ENCODE measurements at regions of chr1 and their contacts with region 1.

Region 1: GRCh38 chr1:205523891-205524793 is 19.7 kb downstream of the CDK18 start:
- DNase-seq: peak; percentile 85
- ATAC-seq: peak; percentile 62
- H3K4me3 Mint-ChIP-seq: no peak overlapping the region
- H3K27ac Mint-ChIP-seq: no peak overlapping the region
- H3K4me1 Mint-ChIP-seq: no peaks in the 10 kb centered on the region
- H3K27me3 Mint-ChIP-seq: no peaks in the 10 kb centered on the region
- CTCF ChIP-seq: peak; percentile 81

Region 2: DNA sequence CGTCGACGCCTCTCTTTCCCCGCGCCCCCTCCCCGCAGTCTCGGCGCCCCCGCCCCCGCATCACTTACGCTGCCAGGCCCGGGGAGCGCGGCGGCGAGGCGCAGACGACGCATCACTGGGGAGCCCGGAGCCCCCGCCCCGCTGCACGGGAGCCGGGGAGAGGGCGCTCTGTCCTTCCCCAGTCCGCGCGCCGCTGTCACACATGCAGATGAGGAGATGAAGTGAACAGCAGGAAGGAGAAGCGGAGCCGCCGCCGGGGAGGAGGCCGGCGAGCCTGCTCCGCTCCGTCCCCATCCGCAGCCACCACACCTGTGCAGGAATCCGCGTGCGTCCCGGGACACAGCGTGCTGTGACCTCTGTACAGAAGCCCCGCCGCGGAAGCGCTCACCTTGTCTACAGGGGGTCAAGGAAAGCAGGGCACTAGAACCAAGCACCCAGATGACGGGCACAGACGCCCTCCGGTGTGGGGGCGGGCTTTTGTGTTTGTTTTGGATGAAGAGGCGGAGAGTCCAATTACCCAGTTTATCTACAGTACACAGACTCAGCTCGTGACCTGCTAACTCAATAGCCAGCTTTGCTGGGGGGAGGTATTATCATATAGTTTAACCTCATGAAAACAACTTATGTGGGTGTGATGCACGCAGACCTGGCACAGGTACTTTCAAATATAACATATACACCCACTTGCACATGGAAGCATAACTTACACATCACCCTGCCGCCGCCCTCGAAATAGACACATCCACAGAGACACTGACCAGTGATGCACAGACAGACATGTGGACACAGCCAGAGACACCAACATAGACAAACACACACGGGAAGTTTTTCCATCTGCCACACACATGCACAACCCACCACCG is 179.8 kb before region 1 on chr1:
- CTCF ChIA-PET with region 1: interaction called, 12 read pairs
- POLR2A ChIA-PET with region 1: no interaction called
- intact Hi-C with region 1: no loop called
- DNase-seq: peak; percentile 65
- ATAC-seq: peak; percentile 77
- H3K4me3 Mint-ChIP-seq: peak overlapping the region; percentile 35
- H3K27ac Mint-ChIP-seq: no peak overlapping the region
- H3K4me1 Mint-ChIP-seq: peaks cover 11% of the 10 kb centered on the region
- H3K27me3 Mint-ChIP-seq: peaks cover 42% of the 10 kb centered on the region
- CTCF ChIP-seq: no peak

Region 3: GRCh38 chr1:205396967-205397616 is 127.0 kb before region 1 on chr1:
- CTCF ChIA-PET with region 1: interaction called, 72 read pairs
- POLR2A ChIA-PET with region 1: no interaction called
- intact Hi-C with region 1: no loop called
- DNase-seq: peak; percentile 29
- ATAC-seq: peak; percentile 88
- H3K4me3 Mint-ChIP-seq: no peak overlapping the region
- H3K27ac Mint-ChIP-seq: no peak overlapping the region
- H3K4me1 Mint-ChIP-seq: no peaks in the 10 kb centered on the region
- H3K27me3 Mint-ChIP-seq: peaks cover 4% of the 10 kb centered on the region
- CTCF ChIP-seq: peak; percentile 87

Region 4: GRCh38 chr1:205493241-205494085 is 30.7 kb before region 1 on chr1:
- CTCF ChIA-PET with region 1: interaction called, 292 read pairs
- POLR2A ChIA-PET with region 1: interaction called, 4 read pairs
- intact Hi-C with region 1: loop called (anchors 1 kb)
- DNase-seq: peak; percentile 45
- ATAC-seq: peak; percentile 85
- H3K4me3 Mint-ChIP-seq: no peak overlapping the region
- H3K27ac Mint-ChIP-seq: no peak overlapping the region
- H3K4me1 Mint-ChIP-seq: peaks cover 4% of the 10 kb centered on the region
- H3K27me3 Mint-ChIP-seq: peaks cover 23% of the 10 kb centered on the region
- CTCF ChIP-seq: no peak

Region 5: GRCh38 chr1:205512059-205513045 is 11.8 kb before region 1 on chr1:
- CTCF ChIA-PET with region 1: interaction called, 14 read pairs
- POLR2A ChIA-PET with region 1: no interaction called
- intact Hi-C with region 1: no loop called
- DNase-seq: peak; percentile 11
- ATAC-seq: no peak
- H3K4me3 Mint-ChIP-seq: no peak overlapping the region
- H3K27ac Mint-ChIP-seq: peak overlapping the region; percentile 3
- H3K4me1 Mint-ChIP-seq: peaks cover 6% of the 10 kb centered on the region
- H3K27me3 Mint-ChIP-seq: no peaks in the 10 kb centered on the region
- CTCF ChIP-seq: no peak

Region 6: DNA sequence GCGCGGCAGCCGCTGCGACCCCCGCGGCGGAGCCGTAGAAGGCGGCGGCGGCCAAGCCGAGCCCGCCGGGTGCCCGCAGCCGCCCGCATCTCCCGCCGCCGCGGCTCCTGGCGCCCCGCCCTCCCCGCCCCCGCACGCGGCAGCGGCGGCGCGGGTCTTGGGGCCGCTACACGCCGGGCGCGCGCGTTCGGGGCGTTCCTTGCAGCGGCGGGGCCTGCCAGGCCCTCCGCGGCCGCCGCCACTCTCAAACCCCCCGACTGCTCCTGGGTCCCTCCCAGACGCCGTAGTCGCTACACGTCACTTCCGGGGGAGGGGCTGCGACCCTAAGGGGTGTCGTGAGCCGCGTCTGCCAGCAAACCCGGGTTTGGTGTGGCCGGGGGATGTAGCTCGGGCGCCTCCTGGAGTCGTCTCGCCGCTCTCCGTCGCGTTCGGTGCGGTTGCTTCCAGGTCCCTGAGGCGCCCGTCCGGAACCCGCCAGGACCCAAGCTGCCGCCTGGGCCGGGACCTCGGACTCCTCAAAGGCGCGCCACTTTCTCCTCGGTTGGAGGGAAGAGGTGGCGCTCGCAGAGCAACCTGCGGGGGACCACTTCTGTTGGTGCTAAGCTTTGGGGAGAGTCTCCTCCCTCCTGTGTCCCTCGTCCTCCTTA is 107.7 kb after region 1 on chr1 and contains the start of gene ELK4:
- CTCF ChIA-PET with region 1: interaction called, 18 read pairs
- POLR2A ChIA-PET with region 1: interaction called, 5 read pairs
- intact Hi-C with region 1: no loop called
- DNase-seq: peak; percentile 99
- ATAC-seq: peak; percentile 85
- H3K4me3 Mint-ChIP-seq: peak within 1 kb of the TSS; percentile 93
- H3K27ac Mint-ChIP-seq: peak within 1 kb of the TSS; percentile 96
- H3K4me1 Mint-ChIP-seq: peaks cover 34% of the 10 kb centered on the region
- H3K27me3 Mint-ChIP-seq: no peaks in the 10 kb centered on the region
- CTCF ChIP-seq: peak; percentile 67
- total RNA-seq, gene ELK4: 61.5 to 62.1 TPM

Measured in activated CD8-positive, alpha-beta T cell treated with anti-CD3 and anti-CD28 coated beads for 36 hours (primary cell).